Activated CD4-positive, alpha-beta memory T cell treated with anti-CD3 and anti-CD28 coated beads, Interleukin-2, amount 10 ng/mL, durations not matched to agents 7 days and 5 days (primary cell): ENCODE measurements at regions of chr9 and their contacts with region 1.

Region 1: DNA sequence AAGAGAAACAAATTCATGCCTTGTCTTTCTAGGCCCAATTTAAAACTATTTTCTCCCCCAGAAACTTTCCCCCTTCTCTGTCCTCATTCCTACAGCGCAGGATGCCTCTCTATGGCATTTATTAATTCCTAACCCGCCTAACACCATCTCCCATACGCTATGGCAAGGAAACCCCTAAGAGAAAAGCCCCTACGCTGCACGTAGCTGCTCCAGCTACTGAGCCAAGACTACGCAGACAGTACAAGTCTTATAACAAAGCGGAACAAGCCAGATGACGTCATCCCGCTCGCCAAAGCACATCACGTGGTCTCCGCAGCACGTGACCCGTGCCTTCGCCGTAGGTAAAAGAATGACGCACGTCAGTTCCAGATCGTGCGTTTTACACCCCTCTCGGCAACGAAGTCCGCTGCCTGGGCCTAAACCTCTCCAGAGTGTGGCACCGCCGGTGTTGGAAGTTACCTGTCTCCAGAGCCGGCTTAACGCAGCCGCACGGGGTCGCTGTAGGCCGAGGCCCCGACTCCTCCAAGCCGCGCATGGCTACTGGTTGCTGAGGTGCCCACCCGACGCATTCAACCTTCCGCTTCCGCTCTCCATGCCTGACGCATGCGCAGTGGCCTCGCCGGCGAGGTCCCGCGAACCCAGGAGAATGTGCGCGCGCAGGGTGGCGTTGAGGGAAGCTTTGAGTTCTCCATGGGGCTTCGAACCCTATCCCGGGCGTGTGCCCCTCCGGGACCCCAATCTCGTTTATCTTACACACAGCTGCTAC is at the start of gene TRMO:
- DNase-seq: peak; percentile 98
- H3K4me3 Mint-ChIP-seq: peak within 1 kb of the TSS; percentile 93
- H3K27ac Mint-ChIP-seq: peak within 1 kb of the TSS; percentile 98
- H3K4me1 Mint-ChIP-seq: peaks cover 51% of the 10 kb centered on the region
- H3K27me3 Mint-ChIP-seq: peaks cover 4% of the 10 kb centered on the region
- total RNA-seq, gene TRMO: 25.4 to 27.4 TPM

Region 2: GRCh38 chr9:97890038-97890437 is 32.1 kb before region 1 on chr9:
- CTCF ChIA-PET with region 1: interaction called, 26 read pairs
- POLR2A ChIA-PET with region 1: interaction called, 13 read pairs
- DNase-seq: peak; percentile 75
- H3K4me3 Mint-ChIP-seq: no peak overlapping the region
- H3K27ac Mint-ChIP-seq: no peak overlapping the region
- H3K4me1 Mint-ChIP-seq: peaks cover 4% of the 10 kb centered on the region
- H3K27me3 Mint-ChIP-seq: no peaks in the 10 kb centered on the region

Region 3: DNA sequence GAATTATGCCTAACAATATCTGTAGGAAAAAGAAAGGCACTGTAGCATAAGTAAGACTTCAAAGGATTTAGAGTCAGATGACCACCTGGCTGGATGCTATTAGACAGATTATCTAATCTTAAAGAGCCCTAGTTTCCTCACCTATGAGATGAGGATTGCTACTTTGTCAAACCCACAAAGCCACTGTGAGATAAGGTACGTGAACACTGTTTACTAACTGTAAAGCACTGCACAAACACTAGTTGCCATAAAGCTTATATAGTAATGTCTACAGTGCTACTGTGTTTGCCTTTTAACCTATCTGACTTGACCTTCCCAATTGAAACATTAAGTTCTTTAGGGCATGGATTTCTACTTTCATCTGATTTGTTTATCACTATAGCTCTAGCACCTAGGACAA is 10.2 kb before region 1 on chr9:
- CTCF ChIA-PET with region 1: interaction called, 175 read pairs
- POLR2A ChIA-PET with region 1: interaction called, 360 read pairs
- DNase-seq: no peak
- H3K4me3 Mint-ChIP-seq: no peak overlapping the region
- H3K27ac Mint-ChIP-seq: no peak overlapping the region
- H3K4me1 Mint-ChIP-seq: peaks cover 62% of the 10 kb centered on the region
- H3K27me3 Mint-ChIP-seq: no peaks in the 10 kb centered on the region

Region 4: DNA sequence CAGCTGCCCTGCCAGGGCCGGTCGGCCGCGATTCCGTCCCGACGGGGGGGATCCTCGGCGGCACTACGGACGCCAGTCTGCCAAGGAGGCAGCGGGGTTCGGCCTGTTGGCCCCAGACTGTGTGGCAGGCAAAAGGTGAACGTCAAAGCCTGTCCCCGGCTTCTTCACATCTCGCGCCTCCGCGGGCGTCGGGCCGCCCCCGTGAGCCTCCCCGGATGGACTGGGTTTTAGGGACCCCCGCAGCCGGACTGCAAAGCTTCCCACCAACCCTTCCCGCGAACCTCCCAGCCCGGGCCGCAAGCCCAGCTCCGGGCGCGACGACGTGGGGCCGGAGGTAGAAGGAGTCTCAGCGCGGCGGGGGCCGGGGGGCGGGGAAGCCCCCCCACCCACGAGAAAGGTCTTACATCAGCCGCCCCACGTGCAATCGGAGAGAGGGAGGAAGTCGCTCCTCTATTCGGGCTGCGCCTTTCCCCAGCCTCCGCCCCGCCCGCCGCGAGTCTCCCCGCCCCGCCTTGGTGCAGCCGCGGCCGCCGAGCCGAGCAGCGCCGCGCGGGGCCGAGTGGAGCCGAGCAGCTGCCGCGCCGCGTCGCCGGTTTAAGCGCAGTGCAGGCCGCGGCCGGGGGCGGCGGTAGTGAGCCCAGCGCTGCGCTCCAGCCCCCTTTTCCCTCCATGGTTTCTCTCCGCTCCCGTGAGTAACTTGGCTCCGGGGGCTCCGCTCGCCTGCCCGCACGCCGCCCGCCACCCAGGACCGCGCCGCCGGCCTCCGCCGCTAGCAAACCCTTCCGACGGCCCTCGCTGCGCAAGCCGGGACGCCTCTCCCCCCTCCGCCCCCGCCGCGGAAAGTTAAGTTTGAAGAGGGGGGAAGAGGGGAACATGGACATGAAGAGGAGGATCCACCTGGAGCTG is 60.8 kb after region 1 on chr9 and contains the start of gene ANP32B:
- CTCF ChIA-PET with region 1: interaction called, 88 read pairs
- POLR2A ChIA-PET with region 1: interaction called, 180 read pairs
- DNase-seq: peak; percentile 95
- H3K4me3 Mint-ChIP-seq: peak within 1 kb of the TSS; percentile 82
- H3K27ac Mint-ChIP-seq: peak within 1 kb of the TSS; percentile 88
- H3K4me1 Mint-ChIP-seq: peaks cover 46% of the 10 kb centered on the region
- H3K27me3 Mint-ChIP-seq: no peaks in the 10 kb centered on the region
- total RNA-seq, gene ANP32B: 317 to 335 TPM

Region 5: GRCh38 chr9:98045234-98046179 is 123.4 kb after region 1 on chr9:
- CTCF ChIA-PET with region 1: interaction called, 6 read pairs
- POLR2A ChIA-PET with region 1: interaction called, 43 read pairs
- DNase-seq: peak; percentile 44
- H3K4me3 Mint-ChIP-seq: peak overlapping the region; percentile 79
- H3K27ac Mint-ChIP-seq: peak overlapping the region; percentile 82
- H3K4me1 Mint-ChIP-seq: peaks cover 49% of the 10 kb centered on the region
- H3K27me3 Mint-ChIP-seq: no peaks in the 10 kb centered on the region